ENCODE measurements at regions of chr3 and their contacts with region 1.

Region 1: DNA sequence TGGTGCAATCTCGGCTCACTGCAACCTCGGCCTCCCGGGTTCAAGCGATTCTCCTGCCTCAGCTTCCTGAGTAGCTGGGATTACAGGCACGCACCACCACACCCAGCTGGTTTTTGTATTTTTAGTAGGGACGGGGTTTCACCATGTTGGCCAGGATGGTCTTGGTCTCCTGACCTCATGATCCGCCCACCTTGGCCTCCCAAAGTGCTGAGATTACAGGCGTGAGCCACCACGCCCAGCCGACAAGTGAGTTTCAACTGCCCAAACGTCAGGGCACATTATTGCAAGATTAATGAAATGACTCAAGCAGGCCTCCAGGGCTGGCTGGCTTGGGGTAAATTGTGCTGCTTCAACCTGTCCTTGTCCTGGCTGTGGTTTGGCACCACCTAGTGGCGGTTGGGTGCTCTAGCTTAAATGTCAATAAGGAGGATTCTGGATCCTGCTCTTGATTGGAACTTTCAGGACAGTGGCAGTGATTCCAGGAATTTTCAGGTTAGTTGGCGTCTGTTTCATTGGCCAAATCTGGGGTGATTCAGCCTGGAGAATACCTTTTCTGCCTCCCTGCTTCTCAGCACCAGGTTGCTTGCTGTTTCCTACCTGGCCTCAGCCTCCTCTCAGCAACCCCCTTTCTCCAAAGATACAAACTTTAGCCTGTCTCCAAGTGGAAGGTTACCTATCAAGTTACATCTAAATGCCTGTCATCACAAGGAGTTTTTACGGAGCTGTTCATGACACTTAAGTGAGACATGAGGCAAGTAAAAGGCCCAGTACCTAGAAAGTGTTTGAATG is 32.4 kb upstream of the SACM1L start:
- DNase-seq: peak; percentile 95
- H3K4me3 Mint-ChIP-seq: no peak overlapping the region
- H3K27ac Mint-ChIP-seq: no peak overlapping the region
- H3K4me1 Mint-ChIP-seq: peaks cover 15% of the 10 kb centered on the region
- H3K27me3 Mint-ChIP-seq: no peaks in the 10 kb centered on the region

Region 2: GRCh38 chr3:45507820-45508317 is 148.9 kb before region 1 on chr3:
- CTCF ChIA-PET with region 1: interaction called, 71 read pairs
- intact Hi-C with region 1: loop called (anchors 1 kb)
- DNase-seq: no peak
- H3K4me3 Mint-ChIP-seq: no peak overlapping the region
- H3K27ac Mint-ChIP-seq: no peak overlapping the region
- H3K4me1 Mint-ChIP-seq: peaks cover 14% of the 10 kb centered on the region
- H3K27me3 Mint-ChIP-seq: no peaks in the 10 kb centered on the region

Region 3: GRCh38 chr3:45528429-45528828 is 128.3 kb before region 1 on chr3:
- CTCF ChIA-PET with region 1: interaction called, 4 read pairs
- intact Hi-C with region 1: loop called (anchors 5 kb)
- DNase-seq: peak; percentile 67
- H3K4me3 Mint-ChIP-seq: no peak overlapping the region
- H3K27ac Mint-ChIP-seq: no peak overlapping the region
- H3K4me1 Mint-ChIP-seq: peaks cover 15% of the 10 kb centered on the region
- H3K27me3 Mint-ChIP-seq: no peaks in the 10 kb centered on the region

Region 4: DNA sequence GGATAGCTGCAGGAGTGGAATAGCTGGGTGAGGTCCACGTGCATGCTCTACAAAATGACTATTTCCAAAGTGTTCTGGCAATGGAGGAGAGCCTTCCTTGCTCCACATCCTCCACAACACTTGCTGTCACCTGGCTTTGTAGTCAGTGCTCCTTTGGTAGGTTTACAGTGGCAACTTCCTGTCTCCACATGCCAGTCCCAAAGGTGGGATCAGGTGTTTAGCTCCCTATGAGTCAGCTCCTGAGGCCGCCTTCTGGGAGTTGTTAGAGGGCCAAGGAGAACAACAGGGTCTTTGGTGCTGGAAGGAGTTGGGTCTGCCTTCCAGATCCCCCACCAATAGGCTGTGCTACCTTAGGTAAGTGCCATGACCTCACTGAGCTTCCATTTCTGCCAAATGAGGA is 77.5 kb before region 1 on chr3:
- CTCF ChIA-PET with region 1: interaction called, 11 read pairs
- intact Hi-C with region 1: no loop called
- DNase-seq: no peak
- H3K4me3 Mint-ChIP-seq: no peak overlapping the region
- H3K27ac Mint-ChIP-seq: no peak overlapping the region
- H3K4me1 Mint-ChIP-seq: no peaks in the 10 kb centered on the region
- H3K27me3 Mint-ChIP-seq: no peaks in the 10 kb centered on the region

Region 5: DNA sequence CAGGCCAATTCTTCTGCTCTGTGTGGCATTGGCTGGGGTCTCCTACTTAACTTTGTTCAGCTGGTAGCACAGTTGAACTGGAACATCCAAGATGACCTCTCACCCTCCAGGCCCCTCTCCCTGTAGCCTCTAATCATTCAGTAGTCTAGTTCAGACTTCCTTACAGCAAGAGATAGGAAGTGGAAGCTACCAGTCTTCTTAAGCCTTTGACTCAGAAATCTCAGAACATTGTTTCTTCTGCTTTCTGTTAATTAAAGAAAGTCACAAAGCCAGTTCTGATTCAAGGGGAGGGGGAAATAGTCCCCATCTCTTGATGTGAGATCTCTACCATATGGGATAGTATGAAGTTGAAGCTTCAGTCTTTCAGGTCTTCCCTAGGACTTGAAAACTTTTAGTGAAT is 13.7 kb after region 1 on chr3:
- CTCF ChIA-PET with region 1: interaction called, 18 read pairs
- intact Hi-C with region 1: no loop called
- DNase-seq: no peak
- H3K4me3 Mint-ChIP-seq: no peak overlapping the region
- H3K27ac Mint-ChIP-seq: no peak overlapping the region
- H3K4me1 Mint-ChIP-seq: peaks cover 38% of the 10 kb centered on the region
- H3K27me3 Mint-ChIP-seq: no peaks in the 10 kb centered on the region

Region 6: GRCh38 chr3:45688882-45689756 is 32.4 kb after region 1 on chr3 and contains the start of gene SACM1L:
- CTCF ChIA-PET with region 1: interaction called, 17 read pairs
- intact Hi-C with region 1: no loop called
- DNase-seq: peak; percentile 98
- H3K4me3 Mint-ChIP-seq: peak within 1 kb of the TSS; percentile 83
- H3K27ac Mint-ChIP-seq: peak within 1 kb of the TSS; percentile 90
- H3K4me1 Mint-ChIP-seq: peaks cover 44% of the 10 kb centered on the region
- H3K27me3 Mint-ChIP-seq: peaks cover 3% of the 10 kb centered on the region
- total RNA-seq, gene SACM1L: 44.9 to 51.0 TPM

Region 7: DNA sequence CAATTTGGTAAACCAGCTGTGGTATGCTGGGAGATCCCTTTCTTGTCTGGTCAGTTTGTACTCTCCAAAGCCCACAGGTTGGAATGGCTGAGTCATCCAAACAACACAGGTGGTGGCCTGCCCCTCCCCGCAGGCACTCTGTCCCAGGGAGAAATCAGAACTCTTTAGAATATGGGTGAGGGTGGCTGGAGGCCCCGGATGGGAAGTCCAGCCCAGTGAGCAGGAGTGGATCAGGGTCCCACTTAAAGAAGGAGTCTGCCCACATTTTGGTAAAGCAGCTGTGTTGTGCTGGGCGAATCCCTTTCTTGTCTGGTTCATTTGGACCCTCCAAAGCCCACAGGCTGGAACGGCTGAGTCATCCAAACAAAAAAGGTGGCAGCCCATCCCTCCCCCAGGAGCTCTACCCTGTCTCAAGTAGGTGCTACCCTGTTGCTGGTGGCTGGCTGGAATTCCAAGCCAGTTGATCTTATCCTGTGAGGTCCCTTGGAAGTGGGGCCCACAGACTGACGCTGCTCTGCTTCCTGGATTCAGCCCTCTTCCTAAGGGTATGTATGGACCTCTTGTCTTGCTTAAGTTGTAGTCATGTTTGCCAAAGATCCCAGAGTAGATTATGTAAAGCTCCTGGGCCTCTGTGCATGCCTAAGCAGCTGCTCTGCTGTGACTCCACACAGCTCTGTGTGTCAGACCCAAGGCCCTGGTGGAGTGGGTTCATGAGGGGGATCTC is 506.7 kb after region 1 on chr3:
- CTCF ChIA-PET with region 1: no interaction called
- intact Hi-C with region 1: no loop called
- DNase-seq: no peak
- H3K4me3 Mint-ChIP-seq: no peak overlapping the region
- H3K27ac Mint-ChIP-seq: no peak overlapping the region
- H3K4me1 Mint-ChIP-seq: no peaks in the 10 kb centered on the region
- H3K27me3 Mint-ChIP-seq: no peaks in the 10 kb centered on the region

Region 8: GRCh38 chr3:46368569-46368968 is 711.8 kb after region 1 on chr3:
- CTCF ChIA-PET with region 1: no interaction called
- intact Hi-C with region 1: loop called (anchors 10 kb)
- DNase-seq: peak; percentile 75
- H3K4me3 Mint-ChIP-seq: no peak overlapping the region
- H3K27ac Mint-ChIP-seq: no peak overlapping the region
- H3K4me1 Mint-ChIP-seq: peaks cover 21% of the 10 kb centered on the region
- H3K27me3 Mint-ChIP-seq: peaks cover 16% of the 10 kb centered on the region

Measured in activated naive CD4-positive, alpha-beta T cell treated with anti-CD3 and anti-CD28 coated beads for 36 hours (primary cell).